GM12878 (cell line): ENCODE measurements at regions of chr3 and their contacts with region 1.

Region 1: DNA sequence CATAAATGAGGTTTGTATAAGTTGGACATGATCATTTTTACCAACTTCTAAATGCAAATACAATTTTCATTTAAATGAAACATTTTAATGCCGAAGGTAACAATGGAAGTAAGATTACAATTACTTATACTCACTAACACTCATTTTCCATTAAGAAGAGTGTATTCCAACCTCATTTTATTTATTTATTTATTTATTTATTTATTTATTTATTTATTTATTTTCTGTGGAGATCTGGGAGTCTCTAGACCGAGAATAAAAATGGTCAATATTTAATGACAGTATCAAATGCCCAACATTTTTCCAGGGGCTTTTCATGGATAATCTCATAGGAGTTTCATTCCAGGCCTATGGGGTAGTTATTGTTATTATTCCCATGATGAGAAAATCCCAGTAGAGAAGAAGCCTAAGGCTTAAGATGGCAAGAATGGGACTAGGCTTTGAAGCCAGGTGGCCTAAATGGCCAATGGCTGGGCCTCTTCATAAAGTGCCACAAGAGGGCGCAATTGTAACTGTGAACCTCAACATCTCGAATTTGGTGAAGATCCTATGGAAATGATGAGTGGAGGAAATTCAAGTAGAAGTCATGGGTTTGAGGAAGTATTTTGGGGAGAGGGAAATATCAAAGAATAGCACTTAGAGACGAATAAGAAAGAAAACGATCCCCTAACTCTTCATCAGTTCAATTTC is 21.3 kb downstream of the VGLL3 start:
- DNase-seq: no peak
- ATAC-seq: peak; percentile 80
- H3K4me3 ChIP-seq: no peak overlapping the region
- H3K27ac ChIP-seq: no peak overlapping the region
- H3K4me1 ChIP-seq: no peaks in the 10 kb centered on the region
- H3K27me3 ChIP-seq: no peaks in the 10 kb centered on the region
- CTCF ChIP-seq: peak; percentile 66 to 79 (median 72)
- EP300 ChIP-seq: no peak
- POLR2A ChIP-seq: no peak
- RAD21 ChIP-seq: peak; percentile 62

Region 2: GRCh38 chr3:86774082-86774691 is 195.5 kb before region 1 on chr3:
- CTCF ChIA-PET with region 1: interaction called, 7 read pairs
- POLR2A ChIA-PET with region 1: no interaction called
- RAD21 ChIA-PET with region 1: no interaction called
- SMC1A ChIA-PET with region 1: no interaction called
- in situ Hi-C with region 1: no loop called
- intact Hi-C with region 1: loop called (anchors 10 kb)
- DNase-seq: no peak
- ATAC-seq: peak; percentile 39; the same call in 1 of the 3 replicates
- H3K4me3 ChIP-seq: no peak overlapping the region
- H3K27ac ChIP-seq: no peak overlapping the region
- H3K4me1 ChIP-seq: no peaks in the 10 kb centered on the region
- H3K27me3 ChIP-seq: no peaks in the 10 kb centered on the region; a peak in 1 of 4 replicates
- CTCF ChIP-seq: peak in 2 of 3 experiments; percentile 16 to 26; a peak in 2 of 6 replicates
- EP300 ChIP-seq: no peak
- POLR2A ChIP-seq: no peak
- RAD21 ChIP-seq: peak; percentile 28; the same call in 1 of the 2 replicates

Region 3: DNA sequence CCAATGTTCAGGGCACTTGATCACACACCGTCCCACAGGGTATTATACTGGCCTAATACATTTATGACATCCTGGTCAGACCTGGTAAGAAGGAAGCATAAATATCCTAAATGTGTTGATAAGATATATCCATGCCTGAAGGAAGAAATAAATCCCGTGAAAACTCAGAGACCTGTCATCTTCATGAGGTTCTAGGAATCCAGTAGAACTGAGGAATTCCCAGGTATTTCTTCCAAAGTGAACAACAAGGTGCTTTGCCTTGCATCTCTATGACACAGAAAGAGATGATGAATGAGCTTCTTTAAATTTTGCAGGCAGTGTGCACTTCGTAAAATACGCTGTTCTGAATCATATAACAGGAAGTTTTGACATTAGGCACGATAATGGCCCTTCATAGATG is 99.4 kb after region 1 on chr3:
- CTCF ChIA-PET with region 1: no interaction called
- POLR2A ChIA-PET with region 1: no interaction called
- RAD21 ChIA-PET with region 1: no interaction called
- SMC1A ChIA-PET with region 1: no interaction called
- in situ Hi-C with region 1: no loop called
- intact Hi-C with region 1: no loop called
- DNase-seq: no peak
- ATAC-seq: no peak
- H3K4me3 ChIP-seq: no peak overlapping the region
- H3K27ac ChIP-seq: no peak overlapping the region
- H3K4me1 ChIP-seq: no peaks in the 10 kb centered on the region
- H3K27me3 ChIP-seq: no peaks in the 10 kb centered on the region
- CTCF ChIP-seq: no peak
- EP300 ChIP-seq: no peak
- POLR2A ChIP-seq: no peak
- RAD21 ChIP-seq: no peak